Activated CD8-positive, alpha-beta T cell treated with anti-CD3 and anti-CD28 coated beads for 36 hours (primary cell): ENCODE measurements at regions of chr1 and their contacts with region 1.

Region 1: GRCh38 chr1:6245086-6245868 is 1.3 kb downstream of the HES3 start:
- DNase-seq: peak; percentile 85
- ATAC-seq: peak; percentile 81
- H3K4me3 Mint-ChIP-seq: no peak overlapping the region
- H3K27ac Mint-ChIP-seq: no peak overlapping the region
- H3K4me1 Mint-ChIP-seq: peaks cover 13% of the 10 kb centered on the region
- H3K27me3 Mint-ChIP-seq: peaks cover 57% of the 10 kb centered on the region
- CTCF ChIP-seq: peak; percentile 69

Region 2: GRCh38 chr1:5740865-5741860 is 504.1 kb before region 1 on chr1:
- CTCF ChIA-PET with region 1: no interaction called
- POLR2A ChIA-PET with region 1: no interaction called
- intact Hi-C with region 1: no loop called
- DNase-seq: no peak
- ATAC-seq: no peak
- H3K4me3 Mint-ChIP-seq: no peak overlapping the region
- H3K27ac Mint-ChIP-seq: no peak overlapping the region
- H3K4me1 Mint-ChIP-seq: peaks cover 5% of the 10 kb centered on the region
- H3K27me3 Mint-ChIP-seq: peaks cover 18% of the 10 kb centered on the region
- CTCF ChIP-seq: no peak

Region 3: GRCh38 chr1:6259491-6260425 is 14.5 kb after region 1 on chr1:
- CTCF ChIA-PET with region 1: interaction called, 42 read pairs
- POLR2A ChIA-PET with region 1: interaction called, 5 read pairs
- intact Hi-C with region 1: no loop called
- DNase-seq: peak; percentile 85
- ATAC-seq: peak; percentile 70
- H3K4me3 Mint-ChIP-seq: peak overlapping the region; percentile 17
- H3K27ac Mint-ChIP-seq: no peak overlapping the region
- H3K4me1 Mint-ChIP-seq: peaks cover 4% of the 10 kb centered on the region
- H3K27me3 Mint-ChIP-seq: peaks cover 16% of the 10 kb centered on the region
- CTCF ChIP-seq: no peak

Region 4: DNA sequence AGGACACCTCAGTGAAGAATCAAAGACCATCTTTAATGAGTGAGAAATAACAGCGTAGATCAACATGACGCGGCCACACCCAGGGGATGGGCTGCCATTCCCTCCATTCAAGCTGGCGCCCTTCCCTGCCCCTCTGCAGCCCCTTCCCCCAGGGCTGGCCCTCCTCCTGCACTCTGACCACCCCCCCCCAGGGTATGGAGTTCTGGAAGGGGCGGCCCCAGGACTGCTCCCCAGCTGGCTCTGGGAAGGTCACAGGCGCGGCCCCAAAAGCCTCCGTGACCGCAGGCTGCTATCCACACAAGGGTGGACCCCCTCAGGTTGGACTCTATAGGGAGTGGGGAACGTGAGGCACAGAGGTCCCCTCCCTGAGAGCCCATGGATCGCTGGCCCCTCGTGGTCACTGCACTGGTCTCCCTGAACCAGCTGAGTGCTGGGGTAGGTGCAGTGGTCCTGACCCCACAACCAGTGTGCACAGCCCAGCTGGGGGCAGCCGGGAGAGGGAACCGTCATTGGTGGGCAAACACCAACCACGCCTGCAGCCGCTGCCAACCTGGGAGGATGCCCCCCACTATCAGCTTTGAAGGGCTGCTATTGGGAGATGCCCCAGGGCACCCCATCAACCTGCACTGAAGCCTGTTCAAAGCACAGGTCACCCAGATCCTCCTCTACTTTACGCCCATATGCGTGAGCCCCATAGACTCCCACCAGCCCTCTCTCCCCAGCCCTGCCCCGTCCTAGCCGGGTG is 31.7 kb after region 1 on chr1:
- CTCF ChIA-PET with region 1: no interaction called
- POLR2A ChIA-PET with region 1: no interaction called
- intact Hi-C with region 1: no loop called
- DNase-seq: no peak
- ATAC-seq: no peak
- H3K4me3 Mint-ChIP-seq: no peak overlapping the region
- H3K27ac Mint-ChIP-seq: no peak overlapping the region
- H3K4me1 Mint-ChIP-seq: no peaks in the 10 kb centered on the region
- H3K27me3 Mint-ChIP-seq: no peaks in the 10 kb centered on the region
- CTCF ChIP-seq: no peak

Region 5: GRCh38 chr1:6393400-6394187 is 148.3 kb after region 1 on chr1 and contains the start of gene ACOT7:
- CTCF ChIA-PET with region 1: interaction called, 26 read pairs
- POLR2A ChIA-PET with region 1: no interaction called
- intact Hi-C with region 1: no loop called
- DNase-seq: peak; percentile 94
- ATAC-seq: peak; percentile 91
- H3K4me3 Mint-ChIP-seq: peak within 1 kb of the TSS; percentile 84
- H3K27ac Mint-ChIP-seq: peak within 1 kb of the TSS; percentile 95
- H3K4me1 Mint-ChIP-seq: peaks cover 21% of the 10 kb centered on the region
- H3K27me3 Mint-ChIP-seq: no peaks in the 10 kb centered on the region
- CTCF ChIP-seq: no peak
- total RNA-seq, gene ACOT7: 80.4 to 86.7 TPM

Region 6: DNA sequence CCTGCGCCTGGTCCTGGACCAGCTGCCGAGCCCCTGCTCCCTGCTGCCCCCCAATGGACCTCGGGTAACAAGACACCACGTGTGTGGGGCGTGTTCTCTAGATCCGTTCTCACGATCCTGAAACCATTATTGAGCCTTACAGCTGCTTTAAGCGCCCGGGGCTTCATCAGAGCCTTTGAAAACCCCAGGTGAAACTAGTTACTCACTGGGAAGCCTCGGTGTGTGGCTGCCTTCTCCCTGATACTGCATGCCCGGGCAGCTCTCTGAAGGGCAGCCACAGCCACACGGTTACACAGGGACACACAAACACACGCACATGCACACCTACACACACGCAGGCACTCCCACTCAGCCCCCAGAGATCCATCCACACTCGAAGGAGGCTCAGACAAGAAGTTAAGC is 169.2 kb after region 1 on chr1:
- CTCF ChIA-PET with region 1: interaction called, 10 read pairs
- POLR2A ChIA-PET with region 1: no interaction called
- intact Hi-C with region 1: no loop called
- DNase-seq: peak; percentile 79
- ATAC-seq: peak; percentile 94
- H3K4me3 Mint-ChIP-seq: no peak overlapping the region
- H3K27ac Mint-ChIP-seq: no peak overlapping the region
- H3K4me1 Mint-ChIP-seq: peaks cover 11% of the 10 kb centered on the region
- H3K27me3 Mint-ChIP-seq: peaks cover 54% of the 10 kb centered on the region
- CTCF ChIP-seq: peak; percentile 62

Region 7: GRCh38 chr1:6454856-6455751 is 209.8 kb after region 1 on chr1:
- CTCF ChIA-PET with region 1: interaction called, 12 read pairs
- POLR2A ChIA-PET with region 1: interaction called, 3 read pairs
- intact Hi-C with region 1: no loop called
- DNase-seq: peak; percentile 39
- ATAC-seq: peak; percentile 50
- H3K4me3 Mint-ChIP-seq: no peak overlapping the region
- H3K27ac Mint-ChIP-seq: no peak overlapping the region
- H3K4me1 Mint-ChIP-seq: peaks cover 18% of the 10 kb centered on the region
- H3K27me3 Mint-ChIP-seq: peaks cover 46% of the 10 kb centered on the region
- CTCF ChIP-seq: peak; percentile 41

Region 8: GRCh38 chr1:6624710-6625583 is 379.7 kb after region 1 on chr1 and contains the start of gene THAP3:
- CTCF ChIA-PET with region 1: no interaction called
- POLR2A ChIA-PET with region 1: no interaction called
- intact Hi-C with region 1: no loop called
- DNase-seq: peak; percentile 90
- ATAC-seq: peak; percentile 98
- H3K4me3 Mint-ChIP-seq: peak within 1 kb of the TSS; percentile 90
- H3K27ac Mint-ChIP-seq: peak within 1 kb of the TSS; percentile 84
- H3K4me1 Mint-ChIP-seq: peaks cover 26% of the 10 kb centered on the region
- H3K27me3 Mint-ChIP-seq: no peaks in the 10 kb centered on the region
- CTCF ChIP-seq: peak; percentile 32
- total RNA-seq, gene THAP3: 19.0 to 24.5 TPM